CD8-positive, alpha-beta T cell (primary cell): ENCODE measurements at regions of chr9 and their contacts with region 1.

Region 1: DNA sequence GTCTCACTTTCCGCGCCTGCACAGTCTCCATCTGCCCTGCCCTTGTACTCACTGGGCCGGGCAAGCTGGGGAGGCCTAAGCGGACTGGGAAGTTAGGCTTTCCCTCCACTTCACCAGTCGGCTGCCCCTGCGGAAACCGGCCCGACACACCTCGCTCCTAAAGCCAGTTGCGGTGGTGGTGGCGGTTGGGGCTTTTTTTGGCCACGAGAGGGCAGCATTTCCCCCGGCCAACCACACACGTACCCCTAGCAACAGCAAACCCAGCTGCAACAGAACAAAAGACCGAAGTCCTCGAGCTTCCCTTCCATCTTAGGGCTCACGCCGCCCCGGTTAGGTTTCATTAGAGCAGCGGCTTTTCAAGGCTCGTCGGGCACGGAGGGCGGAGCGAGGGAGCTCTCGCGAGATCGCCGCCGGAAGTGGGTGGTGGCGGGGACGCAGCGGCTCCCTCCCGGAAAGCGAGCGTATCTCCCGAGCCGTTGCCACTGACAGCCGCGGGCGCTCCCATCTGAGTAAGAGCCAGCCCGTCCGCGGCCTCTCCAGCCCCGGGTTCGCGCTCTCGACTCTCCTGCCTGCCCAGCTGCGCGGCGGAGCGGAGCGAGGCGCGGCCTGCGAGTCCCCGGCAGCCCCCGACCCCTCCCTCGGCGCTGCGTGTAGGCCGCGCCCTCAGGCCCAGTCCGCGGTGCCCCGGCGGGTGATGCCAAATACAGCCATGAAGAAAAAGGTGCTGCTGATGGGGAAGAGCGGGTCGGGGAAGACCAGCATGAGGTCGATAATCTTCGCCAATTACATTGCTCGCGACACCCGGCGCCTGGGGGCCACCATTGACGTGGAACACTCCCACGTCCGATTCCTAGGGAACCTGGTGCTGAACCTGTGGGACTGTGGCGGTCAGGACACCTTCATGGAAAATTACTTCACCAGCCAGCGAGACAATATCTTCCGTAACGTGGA is at the start of gene RRAGA:
- DNase-seq: peak; percentile 88 to 97 (median 93)
- ATAC-seq: peak; percentile 88
- H3K4me3 ChIP-seq: peak within 1 kb of the TSS; percentile 69 to 89
- H3K4me3 Mint-ChIP-seq: peak within 1 kb of the TSS; percentile 95
- H3K27ac ChIP-seq: peak within 1 kb of the TSS; percentile 80 to 96
- H3K27ac Mint-ChIP-seq: peak within 1 kb of the TSS; percentile 97
- H3K4me1 ChIP-seq: peaks cover 19% of the 10 kb centered on the region
- H3K4me1 Mint-ChIP-seq: peaks cover 40% of the 10 kb centered on the region
- H3K27me3 ChIP-seq: no peaks in the 10 kb centered on the region
- H3K27me3 Mint-ChIP-seq: no peaks in the 10 kb centered on the region
- CTCF ChIP-seq: peak; percentile 56
- total RNA-seq, gene RRAGA: 36.0 to 38.0 TPM

Region 2: DNA sequence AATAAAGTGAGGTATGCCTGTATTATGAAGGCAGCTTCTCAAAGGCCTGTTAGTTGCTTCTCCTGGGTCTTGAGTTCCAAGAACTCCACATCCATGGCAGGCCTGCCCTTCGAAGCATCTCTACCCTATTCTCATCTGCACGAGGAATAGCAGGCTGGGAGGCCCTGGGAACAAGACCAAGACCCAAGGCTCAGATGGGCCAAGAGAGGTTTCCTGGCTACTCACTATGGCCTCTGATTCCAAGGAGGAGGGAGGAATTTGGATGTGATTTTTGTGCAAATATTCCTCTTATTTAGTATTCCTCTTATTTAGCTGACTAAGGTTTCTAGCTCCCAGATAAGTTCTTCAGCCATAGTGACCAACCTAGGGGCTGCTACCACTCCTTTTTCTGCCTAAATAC is 167.5 kb before region 1 on chr9:
- CTCF ChIA-PET with region 1: no interaction called
- POLR2A ChIA-PET with region 1: no interaction called
- intact Hi-C with region 1: no loop called
- DNase-seq: no peak
- ATAC-seq: no peak
- H3K4me3 ChIP-seq: no peak overlapping the region
- H3K4me3 Mint-ChIP-seq: no peak overlapping the region
- H3K27ac ChIP-seq: no peak overlapping the region
- H3K27ac Mint-ChIP-seq: no peak overlapping the region
- H3K4me1 ChIP-seq: no peaks in the 10 kb centered on the region
- H3K4me1 Mint-ChIP-seq: no peaks in the 10 kb centered on the region
- H3K27me3 ChIP-seq: no peaks in the 10 kb centered on the region
- H3K27me3 Mint-ChIP-seq: peaks cover 6% of the 10 kb centered on the region
- CTCF ChIP-seq: no peak

Region 3: GRCh38 chr9:18985464-18985951 is 63.7 kb before region 1 on chr9:
- CTCF ChIA-PET with region 1: no interaction called
- POLR2A ChIA-PET with region 1: no interaction called
- intact Hi-C with region 1: no loop called
- DNase-seq: no peak
- ATAC-seq: no peak
- H3K4me3 ChIP-seq: no peak overlapping the region
- H3K4me3 Mint-ChIP-seq: no peak overlapping the region
- H3K27ac ChIP-seq: no peak overlapping the region
- H3K27ac Mint-ChIP-seq: no peak overlapping the region
- H3K4me1 ChIP-seq: no peaks in the 10 kb centered on the region
- H3K4me1 Mint-ChIP-seq: no peaks in the 10 kb centered on the region
- H3K27me3 ChIP-seq: no peaks in the 10 kb centered on the region
- H3K27me3 Mint-ChIP-seq: no peaks in the 10 kb centered on the region
- CTCF ChIP-seq: no peak

Region 4: DNA sequence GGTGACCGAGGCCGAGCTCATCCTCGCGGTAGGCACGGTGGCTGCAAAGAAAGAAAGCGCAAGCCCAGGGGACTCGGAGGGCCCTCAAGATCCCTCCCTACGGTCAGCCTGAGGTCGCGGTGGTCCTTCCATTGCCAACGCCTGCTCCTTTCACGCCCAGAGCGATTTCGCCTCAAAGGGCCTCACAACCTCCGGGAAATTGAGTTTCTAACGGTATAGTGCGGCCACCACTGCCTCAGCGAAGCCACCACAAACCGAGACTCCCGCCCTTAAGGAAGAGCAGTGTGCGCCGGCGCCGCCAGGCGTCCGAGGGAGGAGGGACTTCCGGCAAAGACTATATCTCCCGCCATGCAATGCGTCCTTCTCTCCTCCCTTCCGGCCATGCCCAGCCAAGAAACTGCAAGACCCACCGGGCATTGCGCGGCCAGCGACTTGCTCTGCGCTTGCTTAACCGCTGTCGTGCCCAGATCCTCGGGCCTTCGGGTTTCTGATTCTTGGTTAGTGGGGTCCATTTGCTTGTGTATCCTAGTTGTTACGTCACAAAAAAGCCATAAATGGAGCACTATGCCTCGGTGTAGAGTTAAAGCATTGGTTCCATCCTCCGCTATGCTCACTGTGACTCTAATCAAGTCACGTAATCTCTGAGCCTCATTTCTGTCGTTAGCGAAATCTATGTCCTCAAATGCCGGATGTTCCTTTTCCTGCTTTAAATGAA is 53.5 kb after region 1 on chr9 and contains the start of gene HAUS6:
- CTCF ChIA-PET with region 1: no interaction called
- POLR2A ChIA-PET with region 1: interaction called, 11 read pairs
- intact Hi-C with region 1: loop called (anchors 1 kb)
- DNase-seq: peak; percentile 73 to 98 (median 92)
- ATAC-seq: peak; percentile 92
- H3K4me3 ChIP-seq: peak within 1 kb of the TSS; percentile 51 to 71
- H3K4me3 Mint-ChIP-seq: peak within 1 kb of the TSS; percentile 96
- H3K27ac ChIP-seq: peak within 1 kb of the TSS; percentile 58 to 83
- H3K27ac Mint-ChIP-seq: peak within 1 kb of the TSS; percentile 94
- H3K4me1 ChIP-seq: peaks cover 19% of the 10 kb centered on the region
- H3K4me1 Mint-ChIP-seq: peaks cover 29% of the 10 kb centered on the region
- H3K27me3 ChIP-seq: no peaks in the 10 kb centered on the region
- H3K27me3 Mint-ChIP-seq: no peaks in the 10 kb centered on the region
- CTCF ChIP-seq: no peak
- total RNA-seq, gene HAUS6: 14.2 to 16.5 TPM

Region 5: GRCh38 chr9:19127881-19128500 is 78.8 kb after region 1 on chr9:
- CTCF ChIA-PET with region 1: no interaction called
- POLR2A ChIA-PET with region 1: interaction called, 10 read pairs
- intact Hi-C with region 1: loop called (anchors 2 kb)
- DNase-seq: peak in 7 of 9 experiments; percentile 7 to 68 (median 46)
- ATAC-seq: peak; percentile 19
- H3K4me3 ChIP-seq: peak overlapping the region; percentile 62 to 70
- H3K4me3 Mint-ChIP-seq: peak overlapping the region; percentile 93
- H3K27ac ChIP-seq: peak overlapping the region; percentile 83 to 91
- H3K27ac Mint-ChIP-seq: peak overlapping the region; percentile 94
- H3K4me1 ChIP-seq: peaks cover 48% of the 10 kb centered on the region
- H3K4me1 Mint-ChIP-seq: peaks cover 53% of the 10 kb centered on the region
- H3K27me3 ChIP-seq: no peaks in the 10 kb centered on the region
- H3K27me3 Mint-ChIP-seq: no peaks in the 10 kb centered on the region
- CTCF ChIP-seq: no peak

Region 6: GRCh38 chr9:19184144-19184917 is 135.1 kb after region 1 on chr9:
- CTCF ChIA-PET with region 1: interaction called, 8 read pairs
- POLR2A ChIA-PET with region 1: interaction called, 7 read pairs
- intact Hi-C with region 1: loop called (anchors 1 to 2 kb)
- DNase-seq: peak; percentile 49 to 94 (median 82)
- ATAC-seq: peak; percentile 99
- H3K4me3 ChIP-seq: peak overlapping the region in 1 of 2 experiments; percentile 3
- H3K4me3 Mint-ChIP-seq: peak overlapping the region; percentile 71
- H3K27ac ChIP-seq: peak overlapping the region; percentile 55 to 87
- H3K27ac Mint-ChIP-seq: peak overlapping the region; percentile 96
- H3K4me1 ChIP-seq: peaks cover 34% of the 10 kb centered on the region
- H3K4me1 Mint-ChIP-seq: peaks cover 25% of the 10 kb centered on the region
- H3K27me3 ChIP-seq: no peaks in the 10 kb centered on the region
- H3K27me3 Mint-ChIP-seq: no peaks in the 10 kb centered on the region
- CTCF ChIP-seq: no peak

Region 7: GRCh38 chr9:19408693-19409400 is 359.6 kb after region 1 on chr9 and contains the start of gene ACER2:
- CTCF ChIA-PET with region 1: no interaction called
- POLR2A ChIA-PET with region 1: no interaction called
- intact Hi-C with region 1: loop called in 1 of 2 experiments (anchors 1 kb)
- DNase-seq: peak; percentile 85 to 99 (median 93)
- ATAC-seq: peak; percentile 97
- H3K4me3 ChIP-seq: peak within 1 kb of the TSS; percentile 86 to 97
- H3K4me3 Mint-ChIP-seq: peak within 1 kb of the TSS; percentile 93
- H3K27ac ChIP-seq: peak within 1 kb of the TSS; percentile 44 to 46
- H3K27ac Mint-ChIP-seq: peak within 1 kb of the TSS; percentile 69
- H3K4me1 ChIP-seq: peaks cover 14% of the 10 kb centered on the region
- H3K4me1 Mint-ChIP-seq: peaks cover 16% of the 10 kb centered on the region
- H3K27me3 ChIP-seq: no peaks in the 10 kb centered on the region
- H3K27me3 Mint-ChIP-seq: no peaks in the 10 kb centered on the region
- CTCF ChIP-seq: no peak
- total RNA-seq, gene ACER2: 0.62 to 1.2 TPM

Region 8: DNA sequence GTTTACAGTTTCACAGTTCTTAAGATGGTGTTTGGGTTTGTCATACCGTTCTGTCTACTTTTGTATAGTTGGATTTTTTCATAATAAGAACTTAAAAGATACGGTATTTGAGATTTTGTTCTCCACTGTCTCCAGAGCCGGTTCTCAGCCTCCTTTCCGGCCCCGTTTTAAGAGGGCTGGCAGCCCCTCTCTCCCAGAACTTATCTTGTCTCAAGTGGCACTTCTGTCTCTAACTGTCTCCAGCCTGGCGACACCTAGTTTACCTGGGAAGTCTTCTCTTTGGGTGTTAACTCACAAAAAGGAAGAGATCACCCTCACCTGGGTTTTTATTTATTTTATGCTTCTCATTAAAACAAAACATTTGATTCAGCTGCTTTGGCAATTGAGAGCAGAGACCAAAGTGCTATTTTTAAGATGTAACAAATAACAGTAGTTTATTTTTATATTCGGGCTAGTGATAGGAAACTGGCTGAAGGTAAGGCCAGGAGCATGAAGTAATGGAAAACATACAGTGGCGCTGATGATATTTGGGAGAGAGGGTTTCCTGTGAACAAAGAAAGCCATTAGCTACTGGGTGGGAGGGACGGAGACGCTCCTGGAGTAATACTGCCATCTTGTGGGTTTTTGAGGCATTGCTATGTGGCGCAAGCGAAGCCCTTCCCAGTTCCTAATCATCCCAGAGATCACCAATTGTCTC is 407.9 kb after region 1 on chr9:
- CTCF ChIA-PET with region 1: interaction called, 6 read pairs
- POLR2A ChIA-PET with region 1: no interaction called
- intact Hi-C with region 1: loop called (anchors 2 to 5 kb)
- DNase-seq: peak; percentile 10 to 81 (median 59)
- ATAC-seq: peak; percentile 96
- H3K4me3 ChIP-seq: no peak overlapping the region
- H3K4me3 Mint-ChIP-seq: peak overlapping the region; percentile 24
- H3K27ac ChIP-seq: no peak overlapping the region
- H3K27ac Mint-ChIP-seq: no peak overlapping the region
- H3K4me1 ChIP-seq: peaks cover 7% of the 10 kb centered on the region
- H3K4me1 Mint-ChIP-seq: peaks cover 5% of the 10 kb centered on the region
- H3K27me3 ChIP-seq: no peaks in the 10 kb centered on the region
- H3K27me3 Mint-ChIP-seq: peaks cover 5% of the 10 kb centered on the region
- CTCF ChIP-seq: peak; percentile 89

Region 9: GRCh38 chr9:19757745-19758144 is 708.5 kb after region 1 on chr9:
- CTCF ChIA-PET with region 1: no interaction called
- POLR2A ChIA-PET with region 1: no interaction called
- intact Hi-C with region 1: no loop called
- DNase-seq: no peak
- ATAC-seq: no peak
- H3K4me3 ChIP-seq: no peak overlapping the region
- H3K4me3 Mint-ChIP-seq: no peak overlapping the region
- H3K27ac ChIP-seq: no peak overlapping the region
- H3K27ac Mint-ChIP-seq: no peak overlapping the region
- H3K4me1 ChIP-seq: no peaks in the 10 kb centered on the region
- H3K4me1 Mint-ChIP-seq: no peaks in the 10 kb centered on the region
- H3K27me3 ChIP-seq: no peaks in the 10 kb centered on the region
- H3K27me3 Mint-ChIP-seq: peaks cover 1% of the 10 kb centered on the region
- CTCF ChIP-seq: no peak